Ovary (tissue), 10 donors: ENCODE measurements at regions of chr6 and their contacts with region 1.

Region 1: DNA sequence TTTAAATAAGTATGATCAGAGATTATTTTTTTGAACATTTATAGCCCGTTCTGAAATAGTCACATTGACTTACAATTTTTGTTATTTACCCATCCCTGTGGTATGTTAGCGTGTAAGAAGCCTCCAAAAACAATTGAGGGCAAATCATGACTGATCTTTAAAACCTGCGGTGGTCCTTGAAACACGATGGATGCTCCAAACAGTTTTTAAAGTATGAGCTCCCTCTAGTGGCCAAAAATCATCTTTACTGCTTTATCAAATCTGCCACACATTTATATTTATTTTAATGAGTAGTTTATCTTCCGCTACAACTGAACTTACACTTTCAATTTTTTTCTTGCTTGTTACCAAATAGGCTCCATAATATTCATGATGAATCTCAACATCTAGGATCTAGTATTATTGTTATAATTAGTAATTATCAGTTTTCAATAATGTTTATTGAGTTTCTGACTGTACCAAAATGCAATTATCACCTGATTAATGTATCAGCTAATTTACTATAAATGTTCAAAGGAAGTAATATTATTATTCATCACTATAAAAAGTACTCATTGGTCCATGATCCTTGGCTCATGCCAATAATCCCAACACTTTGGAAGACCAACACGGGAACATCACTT is 52.2 kb downstream of the MARCKS start:
- DNase-seq: no peak
- H3K4me3 ChIP-seq: no peak overlapping the region
- H3K27ac ChIP-seq: no peak overlapping the region
- H3K4me1 ChIP-seq: peaks cover 2% of the 10 kb centered on the region
- H3K27me3 ChIP-seq: no peaks in the 10 kb centered on the region
- CTCF ChIP-seq: peak; percentile 57 to 74 (median 72)
- EP300 ChIP-seq: no peak
- POLR2A ChIP-seq: no peak

Region 2: DNA sequence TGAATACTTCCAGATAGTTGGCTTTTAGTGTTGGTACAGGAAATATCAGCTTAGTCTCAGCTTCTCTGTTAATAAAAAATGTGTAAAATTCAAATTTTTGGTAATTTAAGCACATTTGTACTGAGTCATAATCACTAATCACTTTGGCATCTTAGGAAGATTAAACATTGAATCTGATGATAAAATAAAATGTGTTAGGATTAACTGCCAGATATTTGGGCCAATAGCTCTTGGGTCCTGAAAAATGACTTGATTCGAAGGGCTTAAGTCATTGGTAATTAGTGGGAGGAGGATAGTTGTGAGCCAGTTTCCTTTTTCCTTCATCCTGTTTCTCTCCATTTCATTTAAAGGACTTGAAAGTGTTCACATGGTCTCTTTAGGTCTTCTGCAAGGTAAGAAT is 1136.2 kb before region 1 on chr6:
- intact Hi-C with region 1: loop called in 2 of 4 experiments (anchors 10 kb)
- DNase-seq: no peak
- H3K4me3 ChIP-seq: no peak overlapping the region
- H3K27ac ChIP-seq: no peak overlapping the region
- H3K4me1 ChIP-seq: no peaks in the 10 kb centered on the region
- H3K27me3 ChIP-seq: no peaks in the 10 kb centered on the region
- CTCF ChIP-seq: no peak
- EP300 ChIP-seq: no peak
- POLR2A ChIP-seq: no peak